Naive thymus-derived CD4-positive, alpha-beta T cell (primary cell): ENCODE measurements at regions of chr2 and their contacts with region 1.

Region 1: DNA sequence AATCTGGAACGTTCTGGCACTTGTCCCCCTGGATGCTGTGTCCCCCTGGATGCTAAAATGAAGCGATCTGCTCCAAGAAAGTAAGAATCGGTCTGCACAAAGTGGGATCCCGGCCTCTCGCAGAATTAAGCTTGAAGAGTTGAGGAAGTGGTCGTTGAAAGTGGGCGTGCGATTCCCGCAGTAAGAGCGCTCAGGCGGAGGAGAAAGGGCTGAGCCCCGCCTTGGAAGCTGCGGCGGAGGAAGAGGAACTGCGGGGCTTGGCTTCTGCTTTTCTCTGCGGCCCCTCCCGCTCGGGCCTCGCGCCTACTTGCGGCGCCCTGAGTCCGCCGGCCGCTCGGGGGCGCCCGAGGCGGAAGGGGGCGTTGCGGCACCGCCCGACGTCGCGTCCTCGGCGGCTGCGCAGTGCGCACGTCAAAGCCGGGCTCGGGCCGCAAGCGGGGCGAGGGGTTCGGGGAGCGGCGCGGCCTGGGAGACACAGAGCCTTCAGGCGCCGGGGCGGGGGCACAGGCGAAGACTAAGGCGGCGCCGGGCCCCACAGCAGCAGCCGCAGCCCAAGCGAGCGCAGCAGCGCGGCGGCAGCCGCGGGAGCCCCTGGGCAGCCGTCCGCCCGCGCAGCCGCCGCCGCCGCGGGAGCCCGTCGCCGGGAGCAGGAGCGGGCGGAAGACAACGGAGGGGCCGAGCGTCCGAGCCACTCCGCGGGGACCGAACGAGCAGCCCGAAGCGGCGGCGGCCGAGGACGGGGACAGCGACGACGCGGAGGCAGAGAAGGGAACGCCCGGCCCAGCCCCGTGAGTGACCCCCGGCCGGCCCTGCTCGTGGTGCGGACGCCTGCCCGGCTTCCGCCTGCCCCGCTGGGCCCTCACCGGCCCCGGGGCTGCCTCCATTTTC is at the start of gene CAB39:
- DNase-seq: peak; percentile 82 to 94 (median 90)
- ATAC-seq: peak; percentile 96
- H3K4me3 ChIP-seq: peak within 1 kb of the TSS; percentile 92
- H3K4me3 Mint-ChIP-seq: peak within 1 kb of the TSS; percentile 91 to 99 (median 98)
- H3K27ac ChIP-seq: peak within 1 kb of the TSS; percentile 91
- H3K27ac Mint-ChIP-seq: peak within 1 kb of the TSS; percentile 92 to 98 (median 97)
- H3K4me1 ChIP-seq: peaks cover 27 to 35% of the 10 kb centered on the region in 2 donors
- H3K4me1 Mint-ChIP-seq: peaks cover 31 to 53% (median 50%) of the 10 kb centered on the region in 7 donors
- H3K27me3 ChIP-seq: no peaks in the 10 kb centered on the region
- H3K27me3 Mint-ChIP-seq: no peaks in the 10 kb centered on the region
- total RNA-seq, gene CAB39: 71.0 to 186 (median 95.4) TPM

Region 2: GRCh38 chr2:230225486-230225885 is 487.2 kb before region 1 on chr2 and contains the start of gene SP140:
- CTCF ChIA-PET with region 1: no interaction called
- POLR2A ChIA-PET with region 1: no interaction called
- intact Hi-C with region 1: loop called in 1 of 2 experiments (anchors 2 kb)
- DNase-seq: peak; percentile 34 to 91 (median 77)
- ATAC-seq: peak; percentile 97
- H3K4me3 ChIP-seq: peak within 1 kb of the TSS; percentile 70
- H3K4me3 Mint-ChIP-seq: peak within 1 kb of the TSS; percentile 82 to 94 (median 87)
- H3K27ac ChIP-seq: peak within 1 kb of the TSS; percentile 79
- H3K27ac Mint-ChIP-seq: peak within 1 kb of the TSS; percentile 95 to 100 (median 98)
- H3K4me1 ChIP-seq: peaks cover 21 to 39% of the 10 kb centered on the region in 2 donors
- H3K4me1 Mint-ChIP-seq: peaks cover 28 to 79% (median 65%) of the 10 kb centered on the region in 7 donors
- H3K27me3 ChIP-seq: no peaks in the 10 kb centered on the region
- H3K27me3 Mint-ChIP-seq: no peaks in the 10 kb centered on the region
- total RNA-seq, gene SP140: 34.5 to 120 (median 45.2) TPM

Region 3: GRCh38 chr2:230537531-230537976 is 175.1 kb before region 1 on chr2:
- CTCF ChIA-PET with region 1: no interaction called
- POLR2A ChIA-PET with region 1: no interaction called
- intact Hi-C with region 1: no loop called
- DNase-seq: peak in 1 of 9 donors; percentile 34
- ATAC-seq: no peak
- H3K4me3 ChIP-seq: no peak overlapping the region
- H3K4me3 Mint-ChIP-seq: no peak overlapping the region
- H3K27ac ChIP-seq: no peak overlapping the region
- H3K27ac Mint-ChIP-seq: peak overlapping the region; percentile 16 to 89 (median 54)
- H3K4me1 ChIP-seq: no peaks in the 10 kb centered on the region
- H3K4me1 Mint-ChIP-seq: peaks cover 0 to 36% (median 4%) of the 10 kb centered on the region in 7 donors
- H3K27me3 ChIP-seq: no peaks in the 10 kb centered on the region
- H3K27me3 Mint-ChIP-seq: no peaks in the 10 kb centered on the region

Region 4: GRCh38 chr2:230602562-230603230 is 110.0 kb before region 1 on chr2:
- CTCF ChIA-PET with region 1: interaction called, 3 read pairs
- POLR2A ChIA-PET with region 1: interaction called, 3 read pairs
- intact Hi-C with region 1: loop called in 1 of 2 experiments (anchors 5 kb)
- DNase-seq: peak in 7 of 9 donors; percentile 51 to 79 (median 74)
- ATAC-seq: peak; percentile 90
- H3K4me3 ChIP-seq: peak overlapping the region; percentile 14
- H3K4me3 Mint-ChIP-seq: peak overlapping the region; percentile 66 to 90 (median 78)
- H3K27ac ChIP-seq: peak overlapping the region; percentile 64
- H3K27ac Mint-ChIP-seq: peak overlapping the region; percentile 93 to 99 (median 98)
- H3K4me1 ChIP-seq: peaks cover 35 to 38% of the 10 kb centered on the region in 2 donors
- H3K4me1 Mint-ChIP-seq: peaks cover 27 to 84% (median 71%) of the 10 kb centered on the region in 7 donors
- H3K27me3 ChIP-seq: no peaks in the 10 kb centered on the region
- H3K27me3 Mint-ChIP-seq: no peaks in the 10 kb centered on the region

Region 5: GRCh38 chr2:230658877-230659652 is 53.6 kb before region 1 on chr2:
- CTCF ChIA-PET with region 1: interaction called, 4 read pairs
- POLR2A ChIA-PET with region 1: interaction called, 6 read pairs
- intact Hi-C with region 1: loop called (anchors 1 kb)
- DNase-seq: peak in 5 of 9 donors; percentile 17 to 69 (median 28)
- ATAC-seq: peak; percentile 47
- H3K4me3 ChIP-seq: no peak overlapping the region
- H3K4me3 Mint-ChIP-seq: peak overlapping the region; percentile 42 to 92 (median 74)
- H3K27ac ChIP-seq: peak overlapping the region; percentile 48
- H3K27ac Mint-ChIP-seq: peak overlapping the region; percentile 63 to 98 (median 84)
- H3K4me1 ChIP-seq: peaks cover 62 to 64% of the 10 kb centered on the region in 2 donors
- H3K4me1 Mint-ChIP-seq: peaks cover 62 to 88% (median 87%) of the 10 kb centered on the region in 7 donors
- H3K27me3 ChIP-seq: no peaks in the 10 kb centered on the region
- H3K27me3 Mint-ChIP-seq: no peaks in the 10 kb centered on the region

Region 6: DNA sequence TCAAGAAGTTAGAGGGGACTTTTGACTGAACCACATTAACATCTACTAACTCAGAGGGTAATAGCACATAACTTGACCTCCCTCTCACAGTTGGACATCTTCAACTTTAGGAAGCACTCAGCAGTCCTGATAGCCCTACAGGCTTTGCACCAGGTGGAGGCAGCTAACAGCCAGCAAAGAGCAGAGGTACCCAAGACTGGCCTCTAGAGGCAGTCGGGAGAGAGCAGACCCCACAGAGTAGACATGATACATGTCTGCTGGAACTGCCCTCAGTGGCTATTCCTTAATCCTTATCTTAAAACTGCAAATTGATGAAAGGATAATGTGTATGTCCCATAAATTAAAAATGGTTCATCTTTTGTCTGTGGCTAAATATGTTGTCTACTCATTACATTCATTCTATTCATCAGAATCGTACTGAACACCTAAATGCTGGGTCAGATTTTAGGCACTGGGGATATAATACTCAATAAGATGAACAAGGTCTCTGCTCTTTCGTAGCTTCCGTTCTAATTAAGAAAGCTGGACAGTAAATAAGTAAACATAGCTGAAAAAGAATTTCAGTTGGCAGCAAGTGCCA is 49.7 kb after region 1 on chr2:
- CTCF ChIA-PET with region 1: interaction called, 7 read pairs
- POLR2A ChIA-PET with region 1: interaction called, 8 read pairs
- intact Hi-C with region 1: loop called in 1 of 2 experiments (anchors 1 kb)
- DNase-seq: peak in 6 of 9 donors; percentile 13 to 32 (median 22)
- ATAC-seq: peak; percentile 80
- H3K4me3 ChIP-seq: no peak overlapping the region
- H3K4me3 Mint-ChIP-seq: no peak overlapping the region
- H3K27ac ChIP-seq: no peak overlapping the region
- H3K27ac Mint-ChIP-seq: peak overlapping the region in 5 of 9 donors; percentile 0 to 54 (median 23)
- H3K4me1 ChIP-seq: peaks cover 19 to 26% of the 10 kb centered on the region in 2 donors
- H3K4me1 Mint-ChIP-seq: peaks cover 44 to 73% (median 63%) of the 10 kb centered on the region in 7 donors
- H3K27me3 ChIP-seq: no peaks in the 10 kb centered on the region
- H3K27me3 Mint-ChIP-seq: no peaks in the 10 kb centered on the region

Region 7: DNA sequence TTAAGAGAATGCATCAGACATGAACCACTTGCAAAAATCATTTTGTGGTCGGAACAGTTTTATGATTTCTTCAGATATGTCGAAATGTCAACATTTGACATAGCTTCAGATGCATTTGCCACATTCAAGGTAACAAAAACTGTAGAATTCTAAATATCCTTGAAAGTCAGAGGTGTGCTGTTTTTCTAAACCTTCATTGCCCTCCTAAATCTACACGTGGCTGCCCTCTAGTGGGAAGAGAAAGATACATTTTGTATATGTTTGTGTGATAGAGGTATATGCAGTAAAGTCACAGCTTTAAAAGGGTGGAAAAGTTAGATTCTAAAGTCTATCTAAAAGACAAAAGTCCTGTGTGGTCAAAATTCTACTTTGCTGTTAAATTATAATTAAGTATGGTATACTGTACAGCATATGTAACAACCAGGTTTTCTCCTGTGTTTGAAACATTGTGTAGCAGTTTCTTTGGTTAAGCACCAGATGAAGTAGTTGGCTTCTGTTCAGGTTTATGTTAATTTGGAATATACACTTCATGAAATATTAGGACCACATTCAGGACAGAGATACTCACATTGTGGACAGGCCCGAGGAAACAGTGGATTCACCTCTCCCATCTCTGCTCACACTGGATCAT is 86.2 kb after region 1 on chr2:
- CTCF ChIA-PET with region 1: interaction called, 14 read pairs
- POLR2A ChIA-PET with region 1: interaction called, 22 read pairs
- intact Hi-C with region 1: loop called (anchors 1 kb)
- DNase-seq: peak in 7 of 9 donors; percentile 44 to 76 (median 69)
- ATAC-seq: peak; percentile 58
- H3K4me3 ChIP-seq: no peak overlapping the region
- H3K4me3 Mint-ChIP-seq: peak overlapping the region in 3 of 10 donors; percentile 8 to 33 (median 15)
- H3K27ac ChIP-seq: no peak overlapping the region
- H3K27ac Mint-ChIP-seq: peak overlapping the region in 4 of 9 donors; percentile 59 to 76 (median 69)
- H3K4me1 ChIP-seq: peaks cover 30 to 41% of the 10 kb centered on the region in 2 donors
- H3K4me1 Mint-ChIP-seq: peaks cover 6 to 34% (median 26%) of the 10 kb centered on the region in 7 donors
- H3K27me3 ChIP-seq: no peaks in the 10 kb centered on the region
- H3K27me3 Mint-ChIP-seq: no peaks in the 10 kb centered on the region